ENCODE measurements at regions of chr10 and their contacts with region 1.

Region 1: GRCh38 chr10:102225646-102226541 is at the start of gene ELOVL3:
- DNase-seq: peak; percentile 91
- ATAC-seq: peak; percentile 91
- H3K4me3 Mint-ChIP-seq: peak within 1 kb of the TSS; percentile 38
- H3K27ac Mint-ChIP-seq: no peak within 1 kb of the TSS
- H3K4me1 Mint-ChIP-seq: peaks cover 24% of the 10 kb centered on the region
- H3K27me3 Mint-ChIP-seq: peaks cover 39% of the 10 kb centered on the region
- total RNA-seq, gene ELOVL3: 0.14 TPM in 1 of 2 experiments, not detected in the other

Region 2: DNA sequence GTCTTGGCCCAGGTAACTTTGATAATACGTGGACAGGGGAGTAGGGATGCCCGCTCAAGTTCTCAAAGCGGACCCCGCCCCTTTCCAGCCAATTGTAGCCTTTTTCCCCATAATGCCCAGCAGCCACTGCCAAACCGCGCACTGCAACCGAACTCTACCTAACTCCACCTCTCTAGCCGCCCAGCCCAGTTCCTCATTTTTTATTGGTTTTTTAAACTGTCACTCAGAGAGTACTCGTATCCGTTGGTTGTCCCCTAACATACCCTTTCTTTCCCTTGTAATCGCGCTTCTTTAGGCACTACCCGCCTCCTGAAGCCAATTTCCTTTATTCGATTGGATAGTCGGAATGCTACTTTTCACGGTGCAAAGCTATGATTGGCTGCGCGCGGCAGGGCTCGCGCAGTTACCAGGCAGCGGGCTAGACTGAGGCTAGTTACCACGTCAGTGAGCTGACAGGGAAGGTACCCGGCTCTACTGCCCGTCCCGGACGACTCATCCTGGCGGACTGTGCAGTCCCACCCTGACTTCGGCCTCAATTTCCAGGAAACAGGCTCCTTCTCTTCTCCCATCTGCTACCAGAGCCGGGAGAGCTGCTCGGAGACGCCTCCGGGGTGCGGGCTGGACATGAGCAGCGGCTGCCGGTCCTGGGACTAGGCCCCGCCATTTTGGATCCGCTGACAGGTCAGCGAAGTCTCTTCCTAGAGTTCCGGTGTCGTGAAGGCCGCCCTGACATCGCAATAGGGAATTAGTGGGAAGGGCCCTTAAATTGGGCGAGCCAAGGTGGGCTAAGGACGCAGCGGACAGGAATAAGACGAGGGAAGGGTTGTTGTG is 19.4 kb after region 1 on chr10 and contains the start of gene GBF1:
- CTCF ChIA-PET with region 1: interaction called, 64 read pairs
- POLR2A ChIA-PET with region 1: interaction called, 8 read pairs
- intact Hi-C with region 1: loop called in 1 of 2 experiments (anchors 1 kb)
- DNase-seq: peak; percentile 94
- ATAC-seq: peak; percentile 90
- H3K4me3 Mint-ChIP-seq: peak within 1 kb of the TSS; percentile 98
- H3K27ac Mint-ChIP-seq: peak within 1 kb of the TSS; percentile 81
- H3K4me1 Mint-ChIP-seq: peaks cover 44% of the 10 kb centered on the region
- H3K27me3 Mint-ChIP-seq: peaks cover 18% of the 10 kb centered on the region
- total RNA-seq, gene GBF1: 33.1 to 37.5 TPM

Region 3: GRCh38 chr10:102310361-102311024 is 84.6 kb after region 1 on chr10:
- CTCF ChIA-PET with region 1: interaction called, 34 read pairs
- POLR2A ChIA-PET with region 1: interaction called, 4 read pairs
- intact Hi-C with region 1: no loop called
- DNase-seq: no peak
- ATAC-seq: no peak
- H3K4me3 Mint-ChIP-seq: no peak overlapping the region
- H3K27ac Mint-ChIP-seq: no peak overlapping the region
- H3K4me1 Mint-ChIP-seq: peaks cover 53% of the 10 kb centered on the region
- H3K27me3 Mint-ChIP-seq: no peaks in the 10 kb centered on the region

Region 4: GRCh38 chr10:102384053-102384452 is 158.2 kb after region 1 on chr10:
- CTCF ChIA-PET with region 1: interaction called, 30 read pairs
- POLR2A ChIA-PET with region 1: interaction called, 3 read pairs
- intact Hi-C with region 1: no loop called
- DNase-seq: peak; percentile 51
- ATAC-seq: peak; percentile 64
- H3K4me3 Mint-ChIP-seq: no peak overlapping the region
- H3K27ac Mint-ChIP-seq: no peak overlapping the region
- H3K4me1 Mint-ChIP-seq: peaks cover 2% of the 10 kb centered on the region
- H3K27me3 Mint-ChIP-seq: no peaks in the 10 kb centered on the region

Region 5: GRCh38 chr10:102420810-102421644 is 195.1 kb after region 1 on chr10 and contains the start of gene FBXL15:
- CTCF ChIA-PET with region 1: interaction called, 12 read pairs
- POLR2A ChIA-PET with region 1: no interaction called
- intact Hi-C with region 1: loop called in 1 of 2 experiments (anchors 1 kb)
- DNase-seq: peak; percentile 98
- ATAC-seq: peak; percentile 80
- H3K4me3 Mint-ChIP-seq: peak within 1 kb of the TSS; percentile 96
- H3K27ac Mint-ChIP-seq: peak within 1 kb of the TSS; percentile 87
- H3K4me1 Mint-ChIP-seq: peaks cover 30% of the 10 kb centered on the region
- H3K27me3 Mint-ChIP-seq: peaks cover 14% of the 10 kb centered on the region
- total RNA-seq, gene FBXL15: 5.4 to 11.9 TPM

Measured in activated CD4-positive, alpha-beta T cell treated with anti-CD3 and anti-CD28 coated beads for 36 hours (primary cell).